Natural killer cell (primary cell): ENCODE measurements at regions of chr12 and their contacts with region 1.

Region 1: GRCh38 chr12:26097046-26097878 is 27.6 kb downstream of the BHLHE41 start:
- DNase-seq: peak; percentile 23 to 78
- ATAC-seq: peak; percentile 88 to 97 (median 91)
- H3K4me3 ChIP-seq: no peak overlapping the region
- H3K4me3 Mint-ChIP-seq: no peak overlapping the region
- H3K27ac ChIP-seq: no peak overlapping the region
- H3K27ac Mint-ChIP-seq: no peak overlapping the region
- H3K4me1 ChIP-seq: no peaks in the 10 kb centered on the region
- H3K4me1 Mint-ChIP-seq: no peaks in the 10 kb centered on the region
- H3K27me3 ChIP-seq: no peaks in the 10 kb centered on the region
- H3K27me3 Mint-ChIP-seq: peaks cover 5 to 19% of the 10 kb centered on the region in 2 donors
- CTCF ChIP-seq: peak; percentile 93

Region 2: GRCh38 chr12:25725931-25726330 is 371.3 kb before region 1 on chr12:
- intact Hi-C with region 1: no loop called
- DNase-seq: no peak
- ATAC-seq: no peak
- H3K4me3 ChIP-seq: no peak overlapping the region
- H3K4me3 Mint-ChIP-seq: no peak overlapping the region
- H3K27ac ChIP-seq: no peak overlapping the region
- H3K27ac Mint-ChIP-seq: no peak overlapping the region
- H3K4me1 ChIP-seq: no peaks in the 10 kb centered on the region
- H3K4me1 Mint-ChIP-seq: no peaks in the 10 kb centered on the region
- H3K27me3 ChIP-seq: no peaks in the 10 kb centered on the region
- H3K27me3 Mint-ChIP-seq: peaks cover 0 to 4% of the 10 kb centered on the region in 2 donors
- CTCF ChIP-seq: no peak

Region 3: GRCh38 chr12:26651566-26652188 is 554.4 kb after region 1 on chr12:
- intact Hi-C with region 1: loop called (anchors 5 kb)
- DNase-seq: peak in 1 of 2 donors; percentile 42
- ATAC-seq: peak in 2 of 3 donors; percentile 49 to 63
- H3K4me3 ChIP-seq: no peak overlapping the region
- H3K4me3 Mint-ChIP-seq: no peak overlapping the region
- H3K27ac ChIP-seq: no peak overlapping the region
- H3K27ac Mint-ChIP-seq: no peak overlapping the region
- H3K4me1 ChIP-seq: no peaks in the 10 kb centered on the region
- H3K4me1 Mint-ChIP-seq: no peaks in the 10 kb centered on the region
- H3K27me3 ChIP-seq: no peaks in the 10 kb centered on the region
- H3K27me3 Mint-ChIP-seq: no peaks in the 10 kb centered on the region
- CTCF ChIP-seq: peak; percentile 66

Region 4: GRCh38 chr12:26701604-26702215 is 604.4 kb after region 1 on chr12:
- intact Hi-C with region 1: loop called (anchors 1 kb)
- DNase-seq: peak in 1 of 2 donors; percentile 50
- ATAC-seq: peak in 1 of 3 donors; percentile 37
- H3K4me3 ChIP-seq: no peak overlapping the region
- H3K4me3 Mint-ChIP-seq: no peak overlapping the region
- H3K27ac ChIP-seq: no peak overlapping the region
- H3K27ac Mint-ChIP-seq: no peak overlapping the region
- H3K4me1 ChIP-seq: no peaks in the 10 kb centered on the region
- H3K4me1 Mint-ChIP-seq: peaks cover 5 to 6% of the 10 kb centered on the region in 2 donors
- H3K27me3 ChIP-seq: no peaks in the 10 kb centered on the region
- H3K27me3 Mint-ChIP-seq: no peaks in the 10 kb centered on the region
- CTCF ChIP-seq: peak; percentile 64